ENCODE measurements at regions of chr17 and their contacts with region 1.

Region 1: DNA sequence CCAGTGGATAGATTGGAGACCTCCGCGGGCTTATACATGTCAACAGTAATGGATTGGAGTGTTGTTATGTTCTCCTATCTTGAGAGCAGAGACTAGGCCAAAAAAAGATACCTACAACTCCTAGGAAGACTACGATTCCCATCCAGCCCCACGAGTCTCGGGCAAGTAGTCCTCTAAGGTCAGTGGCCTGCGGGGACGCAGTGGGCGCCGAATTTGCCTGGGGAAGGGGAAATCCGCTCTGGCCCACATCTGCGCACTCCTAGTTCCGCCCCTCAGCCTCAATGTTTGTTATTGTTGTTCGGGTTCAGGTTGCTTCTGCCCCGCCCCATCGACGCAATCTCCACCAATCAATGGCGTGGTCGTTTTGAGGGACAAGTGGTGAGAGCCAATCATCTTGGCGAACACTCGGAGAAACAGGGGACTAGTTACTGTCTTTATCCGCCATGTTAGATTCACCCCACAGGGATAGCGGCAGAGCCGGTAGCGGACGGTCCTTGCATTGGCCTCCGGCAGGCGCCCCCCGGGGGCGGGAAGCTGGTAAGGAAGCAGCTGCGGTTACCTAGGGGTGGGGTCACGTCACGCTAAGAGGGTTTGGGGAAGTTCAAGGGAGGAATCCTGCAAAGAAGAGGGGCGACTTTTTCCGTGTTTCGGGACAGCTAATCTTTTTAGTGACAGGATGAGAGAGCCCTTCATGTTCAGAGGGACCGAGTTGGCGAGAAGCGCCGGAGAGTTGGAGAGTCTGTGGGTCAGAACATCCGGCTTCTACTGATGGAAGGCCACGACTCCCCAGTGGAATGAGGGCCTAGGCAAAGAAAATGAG is at the start of gene NBR1:
- DNase-seq: peak; percentile 97 to 98
- ATAC-seq: peak; percentile 94 to 96
- H3K4me3 ChIP-seq: peak within 1 kb of the TSS; percentile 81 to 89 (median 86)
- H3K27ac ChIP-seq: peak within 1 kb of the TSS; percentile 85 to 98 (median 97)
- H3K4me1 ChIP-seq: peaks cover 45 to 48% of the 10 kb centered on the region in 2 donors
- H3K27me3 ChIP-seq: no peaks in the 10 kb centered on the region
- CTCF ChIP-seq: peak in 2 of 5 experiments; percentile 23 to 28
- POLR2A ChIP-seq: peak; percentile 63 to 90
- total RNA-seq, gene NBR1: 135 to 162 (median 145) TPM

Region 2: GRCh38 chr17:42997984-42998938 is 172.7 kb before region 1 on chr17 and contains the start of gene RPL27:
- in situ Hi-C with region 1: no loop called
- intact Hi-C with region 1: loop called (anchors 5 kb)
- DNase-seq: peak; percentile 98 to 99
- ATAC-seq: peak; percentile 99
- H3K4me3 ChIP-seq: peak within 1 kb of the TSS; percentile 84 to 92 (median 88)
- H3K27ac ChIP-seq: peak within 1 kb of the TSS; percentile 84 to 94 (median 91)
- H3K4me1 ChIP-seq: peaks cover 16 to 18% of the 10 kb centered on the region in 2 donors
- H3K27me3 ChIP-seq: no peaks in the 10 kb centered on the region
- CTCF ChIP-seq: peak; percentile 91 to 97 (median 93)
- POLR2A ChIP-seq: peak; percentile 90 to 91
- total RNA-seq, gene RPL27: 800 to 1,300 (median 1,077) TPM

Region 3: DNA sequence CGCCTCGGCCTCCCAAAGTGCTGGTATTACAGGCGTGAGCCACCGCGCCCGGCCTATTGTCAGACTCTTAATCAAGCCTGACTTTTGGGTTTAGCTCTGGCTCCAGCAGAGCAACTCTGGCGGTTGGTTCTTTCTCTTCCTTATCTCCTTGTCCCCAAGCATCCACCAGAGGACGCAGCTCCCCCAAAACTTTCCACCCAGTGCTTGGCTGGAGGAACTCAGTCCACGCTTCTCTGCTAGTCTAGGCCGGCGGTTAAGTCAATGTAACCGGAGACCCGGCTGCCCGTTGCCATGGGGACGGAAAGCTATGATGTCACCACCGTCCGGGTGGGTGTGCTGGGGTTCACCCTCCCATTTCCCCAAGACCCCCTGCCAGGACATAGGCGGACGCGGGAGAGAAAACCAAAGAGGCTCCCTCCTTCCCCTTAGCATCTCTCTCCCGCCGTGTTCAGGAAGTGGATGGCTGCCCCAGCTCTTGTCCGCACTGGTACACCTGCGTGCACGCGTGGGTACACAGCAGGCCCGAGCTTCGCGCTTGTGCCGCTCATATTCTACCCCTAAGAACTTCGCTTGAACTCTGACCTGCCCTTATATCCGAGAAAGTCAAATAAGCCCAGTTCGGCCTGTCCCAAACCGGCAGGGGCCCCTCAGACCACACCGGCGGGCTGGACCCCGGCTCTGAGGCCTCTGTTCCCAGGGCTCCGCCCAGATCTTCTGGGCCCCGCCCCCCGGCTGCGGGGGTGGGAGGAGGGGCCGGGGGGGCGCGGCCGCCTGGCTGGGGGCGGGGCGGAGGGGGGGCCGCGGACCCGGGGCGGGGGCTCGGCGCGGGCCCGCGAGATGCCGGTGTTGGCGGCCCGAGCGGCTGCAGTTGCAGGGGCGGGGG is 146.3 kb before region 1 on chr17 and contains the start of gene RND2:
- in situ Hi-C with region 1: no loop called
- intact Hi-C with region 1: loop called (anchors 2 kb)
- DNase-seq: peak; percentile 70 to 84
- ATAC-seq: peak; percentile 65 to 67
- H3K4me3 ChIP-seq: peak within 1 kb of the TSS; percentile 58 to 78 (median 63)
- H3K27ac ChIP-seq: peak within 1 kb of the TSS; percentile 44 to 64 (median 60)
- H3K4me1 ChIP-seq: peaks cover 14 to 17% of the 10 kb centered on the region in 2 donors
- H3K27me3 ChIP-seq: no peaks in the 10 kb centered on the region
- CTCF ChIP-seq: peak; percentile 54 to 70 (median 65)
- POLR2A ChIP-seq: peak; percentile 27 to 36
- total RNA-seq, gene RND2: 0.04 to 0.10 (median 0.10) TPM in 3 of 4 donors, not detected in the other

Region 4: GRCh38 chr17:43034894-43035293 is 136.1 kb before region 1 on chr17:
- in situ Hi-C with region 1: no loop called
- intact Hi-C with region 1: no loop called
- DNase-seq: no peak
- ATAC-seq: no peak
- H3K4me3 ChIP-seq: no peak overlapping the region
- H3K27ac ChIP-seq: no peak overlapping the region
- H3K4me1 ChIP-seq: peaks cover 0 to 4% of the 10 kb centered on the region in 2 donors
- H3K27me3 ChIP-seq: no peaks in the 10 kb centered on the region
- CTCF ChIP-seq: no peak
- POLR2A ChIP-seq: no peak

Region 5: GRCh38 chr17:43068570-43069367 is 102.2 kb before region 1 on chr17:
- in situ Hi-C with region 1: no loop called
- intact Hi-C with region 1: no loop called
- DNase-seq: no peak
- ATAC-seq: no peak
- H3K4me3 ChIP-seq: no peak overlapping the region
- H3K27ac ChIP-seq: no peak overlapping the region
- H3K4me1 ChIP-seq: no peaks in the 10 kb centered on the region
- H3K27me3 ChIP-seq: no peaks in the 10 kb centered on the region
- CTCF ChIP-seq: no peak
- POLR2A ChIP-seq: no peak

Region 6: GRCh38 chr17:43125133-43125966 is 45.6 kb before region 1 on chr17 and contains the start of gene BRCA1:
- in situ Hi-C with region 1: no loop called
- intact Hi-C with region 1: loop called (anchors 1 kb)
- DNase-seq: peak; percentile 90 to 94
- ATAC-seq: peak; percentile 100
- H3K4me3 ChIP-seq: peak within 1 kb of the TSS; percentile 79 to 96 (median 86)
- H3K27ac ChIP-seq: peak within 1 kb of the TSS; percentile 65 to 85 (median 73)
- H3K4me1 ChIP-seq: peaks cover 4 to 12% of the 10 kb centered on the region in 2 donors
- H3K27me3 ChIP-seq: no peaks in the 10 kb centered on the region
- CTCF ChIP-seq: no peak
- POLR2A ChIP-seq: peak in 1 of 2 donors; percentile 21
- total RNA-seq, gene BRCA1: 2.8 to 4.8 (median 4.0) TPM

Region 7: GRCh38 chr17:43316522-43317142 is 145.7 kb after region 1 on chr17:
- in situ Hi-C with region 1: no loop called
- intact Hi-C with region 1: loop called (anchors 1 kb)
- DNase-seq: no peak
- ATAC-seq: no peak
- H3K4me3 ChIP-seq: no peak overlapping the region
- H3K27ac ChIP-seq: no peak overlapping the region
- H3K4me1 ChIP-seq: no peaks in the 10 kb centered on the region
- H3K27me3 ChIP-seq: no peaks in the 10 kb centered on the region
- CTCF ChIP-seq: no peak
- POLR2A ChIP-seq: no peak

Region 8: GRCh38 chr17:43360739-43361505 is 189.9 kb after region 1 on chr17:
- in situ Hi-C with region 1: no loop called
- intact Hi-C with region 1: loop called (anchors 2 kb)
- DNase-seq: peak; percentile 90 to 97
- ATAC-seq: peak; percentile 83 to 87
- H3K4me3 ChIP-seq: peak overlapping the region; percentile 62 to 74 (median 68)
- H3K27ac ChIP-seq: peak overlapping the region; percentile 84 to 97 (median 92)
- H3K4me1 ChIP-seq: peaks cover 26 to 40% of the 10 kb centered on the region in 2 donors
- H3K27me3 ChIP-seq: no peaks in the 10 kb centered on the region
- CTCF ChIP-seq: no peak
- POLR2A ChIP-seq: peak; percentile 92 to 99

Region 9: GRCh38 chr17:43483674-43484372 is 312.8 kb after region 1 on chr17 and contains the start of gene DHX8:
- in situ Hi-C with region 1: no loop called
- intact Hi-C with region 1: loop called (anchors 1 kb)
- DNase-seq: peak; percentile 96
- ATAC-seq: peak; percentile 98 to 99
- H3K4me3 ChIP-seq: peak within 1 kb of the TSS; percentile 66 to 85 (median 80)
- H3K27ac ChIP-seq: peak within 1 kb of the TSS; percentile 79 to 92 (median 81)
- H3K4me1 ChIP-seq: peaks cover 23 to 24% of the 10 kb centered on the region in 2 donors
- H3K27me3 ChIP-seq: no peaks in the 10 kb centered on the region
- CTCF ChIP-seq: peak; percentile 100
- POLR2A ChIP-seq: peak; percentile 56 to 63
- total RNA-seq, gene DHX8: 24.0 to 30.3 (median 27.2) TPM

Measured in gastrocnemius medialis (tissue), 4 donors.